CD8-positive, alpha-beta T cell (primary cell): ENCODE measurements at regions of chr2 and their contacts with region 1.

Region 1: GRCh38 chr2:219388127-219388844 is 574 bp upstream of the DNPEP start:
- DNase-seq: peak; percentile 98 to 100 (median 99)
- ATAC-seq: peak; percentile 79
- H3K4me3 ChIP-seq: peak overlapping the region; percentile 39 to 42
- H3K4me3 Mint-ChIP-seq: peak overlapping the region; percentile 92
- H3K27ac ChIP-seq: peak overlapping the region; percentile 40 to 86
- H3K27ac Mint-ChIP-seq: peak overlapping the region; percentile 84
- H3K4me1 ChIP-seq: peaks cover 22% of the 10 kb centered on the region
- H3K4me1 Mint-ChIP-seq: peaks cover 23% of the 10 kb centered on the region
- H3K27me3 ChIP-seq: no peaks in the 10 kb centered on the region
- H3K27me3 Mint-ChIP-seq: no peaks in the 10 kb centered on the region
- CTCF ChIP-seq: peak; percentile 62

Region 2: DNA sequence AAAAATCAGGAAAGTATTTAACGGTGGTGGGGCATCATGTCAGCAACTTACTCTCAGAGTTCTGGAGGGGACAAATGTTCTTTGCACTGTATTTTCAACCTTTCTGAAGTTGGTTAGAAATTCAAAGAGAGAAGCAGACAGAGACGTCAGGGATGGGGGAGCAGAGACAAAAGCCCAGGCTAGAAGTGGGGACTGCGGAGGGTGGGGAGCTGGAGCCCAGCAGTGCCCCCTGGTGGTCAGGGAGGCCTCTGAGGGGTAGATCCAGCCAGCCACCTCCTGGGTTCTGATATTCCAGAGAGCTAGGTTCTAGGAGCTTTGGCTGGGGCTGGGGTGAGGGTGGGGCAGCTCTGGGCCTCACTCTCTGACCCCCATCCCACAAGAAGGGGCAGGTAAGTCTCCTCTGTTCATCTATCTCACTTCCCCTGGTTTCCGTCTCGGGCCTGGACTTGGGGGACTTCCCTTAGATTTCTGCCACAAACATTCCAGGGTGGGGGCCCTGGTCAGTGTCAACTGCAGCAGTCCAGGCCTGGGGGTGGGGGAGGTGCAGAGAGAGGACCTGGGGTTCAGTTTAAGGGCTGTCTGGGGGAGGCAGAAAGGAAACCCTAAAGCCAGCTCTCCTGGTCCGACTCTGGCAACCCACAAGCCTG is 1394.3 kb before region 1 on chr2:
- CTCF ChIA-PET with region 1: no interaction called
- POLR2A ChIA-PET with region 1: no interaction called
- intact Hi-C with region 1: no loop called
- DNase-seq: peak in 8 of 9 experiments; percentile 32 to 63 (median 50)
- ATAC-seq: no peak
- H3K4me3 ChIP-seq: no peak overlapping the region
- H3K4me3 Mint-ChIP-seq: no peak overlapping the region
- H3K27ac ChIP-seq: no peak overlapping the region
- H3K27ac Mint-ChIP-seq: no peak overlapping the region
- H3K4me1 ChIP-seq: no peaks in the 10 kb centered on the region
- H3K4me1 Mint-ChIP-seq: no peaks in the 10 kb centered on the region
- H3K27me3 ChIP-seq: no peaks in the 10 kb centered on the region
- H3K27me3 Mint-ChIP-seq: peaks cover 21% of the 10 kb centered on the region
- CTCF ChIP-seq: peak; percentile 56

Region 3: GRCh38 chr2:218216674-218217359 is 1171.5 kb before region 1 on chr2 and contains the start of gene ARPC2:
- CTCF ChIA-PET with region 1: no interaction called
- POLR2A ChIA-PET with region 1: no interaction called
- intact Hi-C with region 1: loop called in 1 of 2 experiments (anchors 5 kb)
- DNase-seq: peak; percentile 90 to 98 (median 95)
- ATAC-seq: peak; percentile 78
- H3K4me3 ChIP-seq: peak within 1 kb of the TSS; percentile 91 to 97
- H3K4me3 Mint-ChIP-seq: peak within 1 kb of the TSS; percentile 91
- H3K27ac ChIP-seq: peak within 1 kb of the TSS; percentile 87 to 99
- H3K27ac Mint-ChIP-seq: peak within 1 kb of the TSS; percentile 97
- H3K4me1 ChIP-seq: peaks cover 36% of the 10 kb centered on the region
- H3K4me1 Mint-ChIP-seq: peaks cover 45% of the 10 kb centered on the region
- H3K27me3 ChIP-seq: no peaks in the 10 kb centered on the region
- H3K27me3 Mint-ChIP-seq: no peaks in the 10 kb centered on the region
- CTCF ChIP-seq: no peak
- total RNA-seq, gene ARPC2: 521 to 547 TPM

Region 4: DNA sequence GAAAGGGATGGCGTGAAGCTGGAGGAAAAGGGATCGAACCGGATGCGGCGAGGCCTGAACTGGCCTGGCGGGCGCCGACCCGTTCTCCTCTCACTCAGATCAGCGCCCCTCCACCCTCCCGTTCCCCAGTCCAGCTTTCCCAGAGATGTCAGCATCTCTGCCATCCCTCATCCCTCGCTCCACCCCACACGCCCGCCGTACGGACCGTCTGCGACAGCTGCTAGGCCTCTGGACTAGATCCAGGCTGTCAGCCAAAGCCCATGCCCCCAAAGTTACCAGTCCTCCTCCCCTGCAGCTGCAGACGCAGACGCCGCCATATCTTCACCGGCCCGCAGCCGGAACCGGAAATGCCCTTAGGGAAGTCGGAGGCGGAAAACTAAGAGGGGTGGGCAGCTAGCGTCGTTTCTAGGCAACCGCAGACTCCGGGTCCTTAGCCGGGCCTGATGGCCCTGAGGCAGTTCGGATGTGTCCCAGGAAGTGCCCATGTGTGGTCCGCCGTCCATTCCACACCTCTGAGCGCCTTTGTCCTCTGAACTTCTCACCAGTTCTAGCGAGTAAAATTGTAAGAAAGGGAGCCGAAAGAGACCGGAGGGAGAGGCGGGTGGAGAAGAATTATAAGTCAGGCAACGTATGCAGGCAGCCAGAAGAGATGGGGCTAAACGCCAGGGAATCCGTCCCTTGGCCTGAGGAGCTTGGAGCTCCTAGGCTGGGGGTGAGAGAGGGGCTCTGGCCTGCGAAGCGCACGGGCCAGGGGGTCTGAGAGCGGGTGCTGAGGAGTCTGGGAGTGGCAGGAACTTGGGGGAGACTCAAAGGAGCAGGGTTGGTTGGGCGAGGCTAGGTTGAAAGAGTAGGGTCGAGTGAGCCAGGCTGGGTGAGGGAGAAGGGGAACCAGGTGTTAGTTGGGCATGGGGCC is 716.4 kb before region 1 on chr2 and contains the starts of genes RNF25 and STK36:
- CTCF ChIA-PET with region 1: no interaction called
- POLR2A ChIA-PET with region 1: no interaction called
- intact Hi-C with region 1: loop called (anchors 5 kb)
- DNase-seq: peak; percentile 56 to 90 (median 82)
- ATAC-seq: peak; percentile 92
- H3K4me3 ChIP-seq: peak within 1 kb of the TSS; percentile 80 to 86
- H3K4me3 Mint-ChIP-seq: peak within 1 kb of the TSS; percentile 97
- H3K27ac ChIP-seq: peak within 1 kb of the TSS; percentile 74 to 83
- H3K27ac Mint-ChIP-seq: peak within 1 kb of the TSS; percentile 96
- H3K4me1 ChIP-seq: peaks cover 16% of the 10 kb centered on the region
- H3K4me1 Mint-ChIP-seq: peaks cover 25% of the 10 kb centered on the region
- H3K27me3 ChIP-seq: no peaks in the 10 kb centered on the region
- H3K27me3 Mint-ChIP-seq: no peaks in the 10 kb centered on the region
- CTCF ChIP-seq: no peak
- total RNA-seq, gene RNF25: 26.0 to 29.3 TPM
- total RNA-seq, gene STK36: 7.5 to 8.1 TPM

Region 5: DNA sequence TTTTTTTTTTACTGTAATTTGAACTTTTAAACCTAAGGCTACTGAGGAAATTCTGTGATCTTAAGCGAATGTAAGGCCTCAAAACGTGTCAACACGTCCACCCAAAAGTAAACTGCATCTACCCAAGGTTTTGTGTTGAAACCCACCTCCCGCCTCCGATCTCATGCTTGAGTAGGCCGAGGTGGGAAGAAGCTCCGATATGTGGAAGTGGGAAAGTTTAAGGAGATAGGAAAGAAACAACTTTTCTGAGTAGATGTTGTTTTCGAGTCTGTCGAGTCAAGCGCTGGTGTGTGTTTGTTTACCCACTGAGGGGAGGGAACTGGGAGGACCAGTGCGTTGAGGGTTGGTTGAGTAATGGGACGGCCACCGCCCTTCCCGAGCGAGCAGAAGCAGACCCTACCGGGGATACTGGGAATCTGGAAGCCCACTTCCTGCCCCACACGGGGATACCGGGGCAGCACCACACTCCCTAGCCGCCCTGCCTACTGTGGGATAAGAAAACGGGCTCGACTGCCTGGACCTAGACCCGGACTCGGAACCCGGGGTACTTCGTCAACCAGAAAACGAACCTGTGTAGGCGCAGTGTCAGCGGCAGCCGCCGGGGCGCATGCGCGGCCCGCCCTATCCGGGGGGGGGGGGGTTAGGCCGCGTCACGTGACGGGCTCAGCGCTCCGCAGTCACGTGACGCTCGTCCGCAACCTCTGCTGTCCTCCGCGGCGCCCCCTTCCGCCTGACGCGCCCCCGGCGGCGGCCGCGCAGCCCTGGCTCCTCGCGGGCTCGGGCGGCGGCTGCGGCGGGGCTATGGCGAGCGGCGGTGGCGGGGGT is 210.5 kb before region 1 on chr2 and contains the start of gene RETREG2:
- CTCF ChIA-PET with region 1: no interaction called
- POLR2A ChIA-PET with region 1: interaction called, 8 read pairs
- intact Hi-C with region 1: loop called (anchors 1 to 5 kb)
- DNase-seq: peak; percentile 61 to 96 (median 78)
- ATAC-seq: peak; percentile 55
- H3K4me3 ChIP-seq: peak within 1 kb of the TSS; percentile 71 to 82
- H3K4me3 Mint-ChIP-seq: peak within 1 kb of the TSS; percentile 91
- H3K27ac ChIP-seq: peak within 1 kb of the TSS; percentile 97 to 98
- H3K27ac Mint-ChIP-seq: peak within 1 kb of the TSS; percentile 99
- H3K4me1 ChIP-seq: peaks cover 75% of the 10 kb centered on the region
- H3K4me1 Mint-ChIP-seq: peaks cover 75% of the 10 kb centered on the region
- H3K27me3 ChIP-seq: no peaks in the 10 kb centered on the region
- H3K27me3 Mint-ChIP-seq: no peaks in the 10 kb centered on the region
- CTCF ChIP-seq: no peak
- total RNA-seq, gene RETREG2: 76.7 to 79.0 TPM

Region 6: GRCh38 chr2:219253753-219254590 is 134.3 kb before region 1 on chr2 and contains the start of gene TUBA4A:
- CTCF ChIA-PET with region 1: interaction called, 3 read pairs
- POLR2A ChIA-PET with region 1: interaction called, 4 read pairs
- intact Hi-C with region 1: loop called (anchors 1 to 2 kb)
- DNase-seq: peak; percentile 82 to 95 (median 91)
- ATAC-seq: peak; percentile 74
- H3K4me3 ChIP-seq: peak within 1 kb of the TSS; percentile 98 to 100
- H3K4me3 Mint-ChIP-seq: peak within 1 kb of the TSS; percentile 87
- H3K27ac ChIP-seq: peak within 1 kb of the TSS; percentile 81 to 93
- H3K27ac Mint-ChIP-seq: peak within 1 kb of the TSS; percentile 96
- H3K4me1 ChIP-seq: peaks cover 37% of the 10 kb centered on the region
- H3K4me1 Mint-ChIP-seq: peaks cover 46% of the 10 kb centered on the region
- H3K27me3 ChIP-seq: no peaks in the 10 kb centered on the region
- H3K27me3 Mint-ChIP-seq: no peaks in the 10 kb centered on the region
- CTCF ChIP-seq: no peak
- total RNA-seq, gene TUBA4A: 322 TPM

Region 7: GRCh38 chr2:219402665-219403515 is 14.6 kb after region 1 on chr2:
- CTCF ChIA-PET with region 1: interaction called, 40 read pairs
- POLR2A ChIA-PET with region 1: interaction called, 4 read pairs
- intact Hi-C with region 1: no loop called
- DNase-seq: peak; percentile 18 to 77 (median 62)
- ATAC-seq: peak; percentile 99
- H3K4me3 ChIP-seq: no peak overlapping the region
- H3K4me3 Mint-ChIP-seq: no peak overlapping the region
- H3K27ac ChIP-seq: no peak overlapping the region
- H3K27ac Mint-ChIP-seq: no peak overlapping the region
- H3K4me1 ChIP-seq: peaks cover under 1% of the 10 kb centered on the region
- H3K4me1 Mint-ChIP-seq: peaks cover 4% of the 10 kb centered on the region
- H3K27me3 ChIP-seq: no peaks in the 10 kb centered on the region
- H3K27me3 Mint-ChIP-seq: no peaks in the 10 kb centered on the region
- CTCF ChIP-seq: peak; percentile 80

Region 8: DNA sequence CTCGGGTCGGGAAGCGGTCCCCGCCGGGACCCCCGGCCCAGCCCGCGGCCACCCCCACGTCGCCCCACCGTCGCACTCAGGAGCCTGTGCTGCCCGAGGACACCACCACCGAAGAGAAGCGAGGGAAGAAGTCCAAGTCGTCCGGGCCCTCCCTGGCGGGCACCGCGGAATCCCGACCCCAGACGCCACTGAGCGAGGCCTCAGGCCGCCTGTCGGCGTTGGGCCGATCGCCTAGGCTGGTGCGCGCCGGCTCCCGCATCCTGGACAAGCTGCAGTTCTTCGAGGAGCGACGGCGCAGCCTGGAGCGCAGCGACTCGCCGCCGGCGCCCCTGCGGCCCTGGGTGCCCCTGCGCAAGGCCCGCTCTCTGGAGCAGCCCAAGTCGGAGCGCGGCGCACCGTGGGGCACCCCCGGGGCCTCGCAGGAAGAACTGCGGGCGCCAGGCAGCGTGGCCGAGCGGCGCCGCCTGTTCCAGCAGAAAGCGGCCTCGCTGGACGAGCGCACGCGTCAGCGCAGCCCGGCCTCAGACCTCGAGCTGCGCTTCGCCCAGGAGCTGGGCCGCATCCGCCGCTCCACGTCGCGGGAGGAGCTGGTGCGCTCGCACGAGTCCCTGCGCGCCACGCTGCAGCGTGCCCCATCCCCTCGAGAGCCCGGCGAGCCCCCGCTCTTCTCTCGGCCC is 60.0 kb after region 1 on chr2:
- CTCF ChIA-PET with region 1: no interaction called
- POLR2A ChIA-PET with region 1: no interaction called
- intact Hi-C with region 1: no loop called
- DNase-seq: peak in 1 of 9 experiments; percentile 47
- ATAC-seq: peak; percentile 36
- H3K4me3 ChIP-seq: peak overlapping the region in 1 of 2 experiments; percentile 49
- H3K4me3 Mint-ChIP-seq: peak overlapping the region; percentile 51
- H3K27ac ChIP-seq: no peak overlapping the region
- H3K27ac Mint-ChIP-seq: no peak overlapping the region
- H3K4me1 ChIP-seq: peaks cover 40% of the 10 kb centered on the region
- H3K4me1 Mint-ChIP-seq: peaks cover 29% of the 10 kb centered on the region
- H3K27me3 ChIP-seq: peaks cover 0 to 3% of the 10 kb centered on the region in 2 experiments
- H3K27me3 Mint-ChIP-seq: peaks cover 15% of the 10 kb centered on the region
- CTCF ChIP-seq: no peak

Region 9: GRCh38 chr2:219543601-219544358 is 155.5 kb after region 1 on chr2 and contains the starts of genes CHPF and TMEM198:
- CTCF ChIA-PET with region 1: interaction called, 11 read pairs
- POLR2A ChIA-PET with region 1: interaction called, 6 read pairs
- intact Hi-C with region 1: loop called (anchors 1 to 5 kb)
- DNase-seq: peak; percentile 82 to 95 (median 90)
- ATAC-seq: peak; percentile 69
- H3K4me3 ChIP-seq: peak within 1 kb of the TSS; percentile 66 to 80
- H3K4me3 Mint-ChIP-seq: peak within 1 kb of the TSS; percentile 87
- H3K27ac ChIP-seq: peak within 1 kb of the TSS; percentile 61 to 73
- H3K27ac Mint-ChIP-seq: peak within 1 kb of the TSS; percentile 84
- H3K4me1 ChIP-seq: peaks cover 18% of the 10 kb centered on the region
- H3K4me1 Mint-ChIP-seq: peaks cover 25% of the 10 kb centered on the region
- H3K27me3 ChIP-seq: no peaks in the 10 kb centered on the region
- H3K27me3 Mint-ChIP-seq: peaks cover 12% of the 10 kb centered on the region
- CTCF ChIP-seq: no peak
- total RNA-seq, gene CHPF: 5.2 to 6.2 TPM
- total RNA-seq, gene TMEM198: 0.31 to 0.46 TPM